PC-9 (cell line): ENCODE measurements at regions of chr1 and their contacts with region 1.

Region 1: GRCh38 chr1:117059678-117060440 is at the start of gene TTF2:
- DNase-seq: peak; percentile 98 to 100
- H3K4me3 ChIP-seq: peak within 1 kb of the TSS; percentile 67
- H3K27ac ChIP-seq: peak within 1 kb of the TSS; percentile 70
- H3K4me1 ChIP-seq: peaks cover 24% of the 10 kb centered on the region
- H3K27me3 ChIP-seq: no peaks in the 10 kb centered on the region
- CTCF ChIP-seq: peak; percentile 50; the same call in 1 of the 2 replicates
- total RNA-seq, gene TTF2: 62.2 and 63.4 TPM in 2 replicates

Region 2: DNA sequence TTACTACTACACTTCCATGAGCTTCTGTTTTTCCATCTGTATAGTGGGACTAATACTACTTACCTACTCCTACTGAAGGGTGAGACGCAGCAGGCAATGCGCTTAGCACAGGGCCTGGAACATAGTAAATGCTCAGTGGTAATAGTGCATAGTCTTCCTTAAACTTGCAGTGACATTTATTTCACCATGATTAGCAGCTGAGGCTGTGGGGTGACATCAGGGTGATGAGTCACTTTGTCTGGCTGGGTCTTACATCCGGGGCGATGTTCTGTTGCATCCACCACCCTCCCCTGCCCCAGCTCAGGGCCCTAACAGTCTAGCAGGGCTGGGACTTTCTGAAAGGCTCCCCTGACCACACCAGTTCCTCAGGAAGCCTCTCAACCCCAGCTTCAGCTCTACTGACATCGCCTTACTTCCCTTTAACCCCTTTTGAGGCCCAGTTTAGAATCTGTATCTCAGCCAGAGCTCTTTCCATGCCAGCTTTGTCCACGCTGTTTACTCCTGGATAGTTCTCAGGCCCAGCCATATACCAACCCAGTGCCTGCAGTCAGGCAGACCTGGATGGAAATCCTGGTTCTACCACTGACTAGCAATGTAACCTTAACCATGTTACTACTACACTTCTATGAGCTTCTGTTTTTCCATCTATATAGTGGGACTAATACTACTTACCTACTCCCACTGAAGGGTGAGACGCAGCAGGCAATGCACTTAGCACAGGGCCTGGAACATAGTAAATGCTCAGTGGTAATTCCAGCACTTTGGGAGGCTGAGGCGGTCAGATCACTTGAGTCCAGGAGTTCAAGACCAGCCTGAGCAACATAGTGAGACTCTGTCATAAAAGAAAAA is 555.3 kb before region 1 on chr1:
- CTCF ChIA-PET with region 1: interaction called, 3 read pairs
- POLR2A ChIA-PET with region 1: no interaction called
- intact Hi-C with region 1: loop called (anchors 5 kb)
- DNase-seq: peak; percentile 67 to 92
- H3K4me3 ChIP-seq: no peak overlapping the region
- H3K27ac ChIP-seq: peak overlapping the region; percentile 86
- H3K4me1 ChIP-seq: peaks cover 67% of the 10 kb centered on the region
- H3K27me3 ChIP-seq: no peaks in the 10 kb centered on the region
- CTCF ChIP-seq: no peak

Region 3: DNA sequence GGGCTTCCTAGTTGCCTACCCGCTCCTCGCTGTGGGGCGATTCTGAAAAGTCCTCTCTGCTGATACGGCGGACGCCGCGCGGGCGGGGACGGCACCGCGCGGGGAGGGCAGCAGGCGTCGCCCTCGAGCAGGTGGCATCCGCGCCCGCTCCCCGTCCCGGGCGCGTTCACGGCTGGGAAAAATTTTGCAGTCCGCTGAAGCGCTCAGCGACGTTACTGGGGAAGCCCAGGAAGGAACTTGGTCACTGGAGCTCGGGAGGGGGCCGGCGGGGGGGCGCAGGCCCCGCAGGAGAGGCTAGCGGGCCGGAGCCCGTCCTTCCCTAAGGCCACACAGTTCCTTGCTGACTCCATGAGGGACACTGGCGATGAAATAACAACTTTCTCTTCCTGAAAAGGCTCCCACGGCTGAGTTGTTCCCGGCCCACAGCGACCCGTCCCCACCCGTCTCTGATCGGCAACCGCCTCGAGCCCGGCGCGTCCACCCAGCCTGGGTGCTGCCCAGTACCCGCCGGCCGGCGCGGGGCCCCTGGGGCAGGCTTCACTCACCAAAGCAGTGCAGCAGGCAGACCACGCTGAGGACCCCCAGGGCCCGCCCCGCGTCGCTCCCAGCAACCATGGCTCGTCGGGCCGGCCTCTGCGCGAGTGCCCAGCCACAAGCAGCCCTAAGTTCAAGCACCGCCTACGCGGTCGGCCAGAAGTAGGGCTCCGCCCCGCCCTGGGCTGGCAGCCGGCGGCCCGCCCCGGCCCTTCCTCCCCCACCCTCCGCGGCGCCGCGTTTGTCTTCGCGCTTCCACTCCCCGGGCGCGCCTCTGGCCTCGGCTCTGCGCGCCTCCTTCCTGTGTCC is 489.3 kb before region 1 on chr1 and contains the start of gene CD58:
- CTCF ChIA-PET with region 1: interaction called, 4 read pairs
- POLR2A ChIA-PET with region 1: interaction called, 5 read pairs
- intact Hi-C with region 1: loop called (anchors 1 kb)
- DNase-seq: peak; percentile 79 to 83
- H3K4me3 ChIP-seq: peak within 1 kb of the TSS; percentile 85
- H3K27ac ChIP-seq: peak within 1 kb of the TSS; percentile 90
- H3K4me1 ChIP-seq: peaks cover 37% of the 10 kb centered on the region
- H3K27me3 ChIP-seq: no peaks in the 10 kb centered on the region
- CTCF ChIP-seq: peak; percentile 78
- total RNA-seq, gene CD58: 15.9 and 23.6 TPM in 2 replicates

Region 4: DNA sequence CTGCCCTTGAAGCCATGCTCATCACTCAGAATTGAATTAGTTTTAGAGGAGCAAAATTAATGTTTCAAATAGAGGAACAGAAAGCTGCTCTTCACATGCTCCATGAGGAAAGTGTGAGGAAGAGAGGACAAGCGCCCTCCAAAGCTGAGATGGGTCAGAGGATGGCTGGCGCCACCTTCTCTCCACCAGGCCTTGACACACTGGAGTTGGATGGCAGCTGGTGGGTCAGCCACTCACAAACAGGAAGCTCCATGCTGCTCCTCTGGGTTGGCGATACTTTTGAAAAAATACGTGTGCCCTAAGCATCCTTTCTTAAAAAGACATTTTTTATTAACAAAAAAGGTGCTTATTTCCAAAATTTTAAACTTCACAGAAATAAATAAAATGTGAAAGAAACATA is 308.7 kb before region 1 on chr1:
- CTCF ChIA-PET with region 1: interaction called, 15 read pairs
- POLR2A ChIA-PET with region 1: no interaction called
- intact Hi-C with region 1: no loop called
- DNase-seq: no peak
- H3K4me3 ChIP-seq: no peak overlapping the region
- H3K27ac ChIP-seq: no peak overlapping the region
- H3K4me1 ChIP-seq: no peaks in the 10 kb centered on the region
- H3K27me3 ChIP-seq: no peaks in the 10 kb centered on the region
- CTCF ChIP-seq: no peak

Region 5: DNA sequence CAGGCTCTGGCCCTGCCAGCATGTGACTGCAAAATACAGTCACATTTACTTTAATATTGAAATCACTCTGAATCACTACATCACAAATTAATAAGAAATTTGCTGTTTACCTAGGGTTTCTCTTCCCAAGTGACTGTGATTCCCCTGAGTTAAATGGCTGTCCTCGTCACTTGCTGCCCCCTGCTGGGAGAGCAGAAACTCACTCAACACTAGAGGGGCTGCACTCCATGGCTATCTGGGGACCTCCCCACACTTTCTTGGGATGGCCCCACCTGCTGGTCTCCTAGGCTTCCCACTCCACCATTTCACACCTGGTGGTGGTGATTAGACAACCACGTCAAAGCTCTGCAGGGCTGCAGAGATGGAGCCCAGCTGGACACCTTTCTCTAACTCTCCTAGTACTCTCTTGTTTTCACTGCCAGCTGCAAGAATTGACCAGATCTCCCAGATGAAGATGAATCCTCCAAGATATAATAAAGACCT is 242.2 kb before region 1 on chr1:
- CTCF ChIA-PET with region 1: interaction called, 8 read pairs
- POLR2A ChIA-PET with region 1: no interaction called
- intact Hi-C with region 1: loop called (anchors 1 kb)
- DNase-seq: peak; percentile 52 to 76
- H3K4me3 ChIP-seq: no peak overlapping the region
- H3K27ac ChIP-seq: no peak overlapping the region
- H3K4me1 ChIP-seq: no peaks in the 10 kb centered on the region
- H3K27me3 ChIP-seq: no peaks in the 10 kb centered on the region
- CTCF ChIP-seq: peak; percentile 94

Region 6: DNA sequence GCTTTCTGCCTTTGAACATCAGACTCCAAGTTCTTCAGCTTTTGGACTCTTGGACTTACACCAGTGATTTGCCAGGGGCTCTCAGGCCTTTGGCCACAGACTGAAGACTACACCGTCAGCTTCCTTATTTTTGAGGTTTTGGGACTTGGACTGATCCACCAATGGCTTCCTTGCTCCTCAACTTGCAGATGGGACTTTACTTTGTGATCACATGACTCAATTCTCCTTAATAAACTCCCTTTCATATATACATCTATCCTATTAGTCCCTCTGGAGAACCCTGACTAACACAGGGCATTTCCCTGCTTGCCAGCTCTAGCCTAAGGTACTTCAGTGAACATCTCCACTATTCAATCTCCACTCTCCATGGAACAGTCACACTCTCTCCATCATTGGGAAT is 216.3 kb before region 1 on chr1:
- CTCF ChIA-PET with region 1: no interaction called
- POLR2A ChIA-PET with region 1: no interaction called
- intact Hi-C with region 1: no loop called
- DNase-seq: no peak
- H3K4me3 ChIP-seq: no peak overlapping the region
- H3K27ac ChIP-seq: no peak overlapping the region
- H3K4me1 ChIP-seq: no peaks in the 10 kb centered on the region
- H3K27me3 ChIP-seq: no peaks in the 10 kb centered on the region
- CTCF ChIP-seq: no peak

Region 7: GRCh38 chr1:116878804-116879477 is 180.9 kb before region 1 on chr1:
- CTCF ChIA-PET with region 1: no interaction called
- POLR2A ChIA-PET with region 1: interaction called, 4 read pairs
- intact Hi-C with region 1: loop called (anchors 1 kb)
- DNase-seq: peak; percentile 33 to 69
- H3K4me3 ChIP-seq: peak overlapping the region; percentile 45; the same call in 1 of the 2 replicates
- H3K27ac ChIP-seq: no peak overlapping the region
- H3K4me1 ChIP-seq: peaks cover 21% of the 10 kb centered on the region
- H3K27me3 ChIP-seq: no peaks in the 10 kb centered on the region
- CTCF ChIP-seq: no peak

Region 8: DNA sequence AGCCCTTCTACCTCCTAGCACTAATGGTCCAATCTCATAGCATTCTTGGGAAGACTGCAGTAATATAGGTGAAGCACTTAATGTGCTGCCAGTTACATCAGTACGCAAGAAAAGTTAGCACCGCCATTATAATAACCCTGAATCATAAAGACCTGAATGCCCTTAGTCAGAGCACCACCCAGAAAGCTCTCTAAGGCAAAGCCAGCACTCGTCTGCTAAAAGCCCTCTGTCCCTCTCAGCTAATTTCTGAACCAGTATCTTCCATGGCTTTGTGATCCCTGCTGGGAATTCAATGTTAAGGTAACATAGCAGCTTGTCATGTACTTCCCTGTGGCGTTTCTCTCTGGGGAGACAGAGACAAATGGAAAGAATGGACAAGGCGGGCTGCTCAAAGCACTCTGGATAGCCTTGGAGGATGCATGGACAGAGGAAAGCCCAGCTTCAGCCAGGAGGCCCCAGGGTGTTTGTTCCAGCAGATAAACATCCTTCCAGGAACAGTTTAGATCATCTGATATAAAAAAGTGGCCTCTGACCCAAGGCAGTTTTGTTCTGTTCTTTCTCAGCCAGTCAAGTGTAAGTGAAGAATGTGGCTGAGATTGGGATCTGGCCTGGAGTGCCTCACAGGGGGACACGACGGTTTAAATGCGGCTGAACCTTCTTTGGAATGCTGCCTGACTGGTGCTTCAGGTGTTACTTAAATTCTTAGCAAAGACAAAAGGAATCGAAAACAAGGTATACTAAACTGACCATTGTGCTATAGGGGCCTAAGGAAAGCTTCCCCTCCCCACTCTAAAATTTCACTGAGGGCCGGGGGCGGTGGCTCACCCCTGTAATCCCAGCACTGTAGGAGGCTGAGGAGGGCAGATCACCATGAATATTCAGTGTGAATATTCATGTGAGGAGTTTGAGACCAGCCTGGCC is 208.9 kb after region 1 on chr1:
- CTCF ChIA-PET with region 1: no interaction called
- POLR2A ChIA-PET with region 1: no interaction called
- intact Hi-C with region 1: loop called (anchors 5 kb)
- DNase-seq: peak; percentile 92 to 100
- H3K4me3 ChIP-seq: peak overlapping the region; percentile 21; the same call in 1 of the 2 replicates
- H3K27ac ChIP-seq: peak overlapping the region; percentile 74
- H3K4me1 ChIP-seq: peaks cover 55% of the 10 kb centered on the region
- H3K27me3 ChIP-seq: no peaks in the 10 kb centered on the region
- CTCF ChIP-seq: no peak